PC-9 (cell line): ENCODE measurements at regions of chr2 and their contacts with region 1.

Region 1: GRCh38 chr2:16911746-16912145 is 246.1 kb upstream of the CYRIA start:
- DNase-seq: no peak
- H3K4me3 ChIP-seq: no peak overlapping the region
- H3K27ac ChIP-seq: no peak overlapping the region
- H3K4me1 ChIP-seq: peaks cover 46% of the 10 kb centered on the region
- H3K27me3 ChIP-seq: no peaks in the 10 kb centered on the region
- CTCF ChIP-seq: no peak

Region 2: DNA sequence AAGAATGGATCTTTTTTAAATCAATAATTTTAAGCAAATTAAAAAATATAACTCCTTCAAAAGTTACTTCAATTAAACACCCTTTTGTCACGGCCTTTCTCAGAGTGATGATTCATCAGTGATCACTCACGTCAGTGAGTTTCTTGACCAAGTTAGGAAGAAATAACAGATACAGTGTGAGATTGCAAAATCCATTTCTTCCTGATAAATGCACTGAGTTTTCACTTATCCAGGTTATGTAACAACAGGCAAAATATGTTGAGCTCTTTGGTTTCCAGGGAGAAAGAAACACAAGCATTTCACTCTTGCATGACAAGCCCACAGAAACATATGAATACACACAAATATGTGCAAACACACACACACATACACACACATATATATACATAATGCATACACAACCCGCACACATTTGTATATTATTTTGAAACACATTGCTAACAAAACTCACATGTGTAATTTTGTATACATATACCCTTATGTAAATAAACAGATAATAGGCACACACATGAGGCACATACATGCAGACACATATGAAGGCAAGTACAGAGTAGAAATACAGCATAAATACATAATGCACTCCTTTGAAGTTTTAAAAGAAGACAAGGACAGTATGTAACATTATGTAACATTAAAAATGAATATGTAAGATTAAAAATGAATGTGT is 50.1 kb before region 1 on chr2:
- CTCF ChIA-PET with region 1: no interaction called
- POLR2A ChIA-PET with region 1: no interaction called
- intact Hi-C with region 1: loop called (anchors 2 kb)
- DNase-seq: peak in 1 of 2 experiments; percentile 80
- H3K4me3 ChIP-seq: no peak overlapping the region
- H3K27ac ChIP-seq: peak overlapping the region; percentile 67
- H3K4me1 ChIP-seq: peaks cover 19% of the 10 kb centered on the region
- H3K27me3 ChIP-seq: no peaks in the 10 kb centered on the region
- CTCF ChIP-seq: no peak

Region 3: DNA sequence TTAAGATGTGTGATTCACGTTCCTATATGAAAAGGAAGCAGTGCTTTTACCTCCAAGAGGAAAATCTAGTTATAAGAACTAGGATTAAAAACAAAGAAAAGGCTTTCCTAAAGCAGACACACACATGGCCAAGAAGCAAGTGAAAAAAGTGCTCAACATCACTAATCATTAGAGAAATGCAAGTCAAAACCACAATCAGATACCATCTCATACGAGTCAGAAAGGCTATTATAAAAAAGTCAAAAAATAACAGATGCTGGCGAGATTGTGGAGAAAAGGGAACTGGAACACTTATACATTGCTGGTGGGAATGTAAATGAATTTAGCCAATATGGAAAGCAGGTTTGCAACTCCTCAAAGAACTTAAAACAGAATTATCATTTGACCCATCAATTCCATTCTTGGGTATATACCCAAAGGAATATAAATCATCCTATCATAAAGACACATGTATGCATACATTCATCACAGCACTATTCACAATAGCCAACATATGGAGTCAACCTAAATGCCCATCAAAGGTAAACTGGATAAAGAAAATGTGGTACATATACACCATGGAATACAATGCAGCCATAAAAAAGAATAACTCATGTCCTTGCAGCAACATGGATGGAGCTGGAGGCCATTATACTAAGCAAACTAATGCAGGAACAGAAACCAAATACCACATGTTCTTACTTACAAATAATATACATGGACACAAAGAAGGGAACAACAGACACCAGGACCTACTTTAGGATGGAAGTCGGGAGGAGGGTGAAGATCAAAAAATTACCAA is 321.2 kb after region 1 on chr2:
- CTCF ChIA-PET with region 1: no interaction called
- POLR2A ChIA-PET with region 1: no interaction called
- intact Hi-C with region 1: no loop called
- DNase-seq: no peak
- H3K4me3 ChIP-seq: no peak overlapping the region
- H3K27ac ChIP-seq: no peak overlapping the region
- H3K4me1 ChIP-seq: no peaks in the 10 kb centered on the region
- H3K27me3 ChIP-seq: no peaks in the 10 kb centered on the region
- CTCF ChIP-seq: no peak

Region 4: GRCh38 chr2:17303054-17303453 is 391.3 kb after region 1 on chr2:
- CTCF ChIA-PET with region 1: no interaction called
- POLR2A ChIA-PET with region 1: no interaction called
- intact Hi-C with region 1: loop called (anchors 1 kb)
- DNase-seq: peak; percentile 35 to 99
- H3K4me3 ChIP-seq: peak overlapping the region; percentile 29; the same call in 1 of the 2 replicates
- H3K27ac ChIP-seq: peak overlapping the region; percentile 82
- H3K4me1 ChIP-seq: peaks cover 74% of the 10 kb centered on the region
- H3K27me3 ChIP-seq: no peaks in the 10 kb centered on the region
- CTCF ChIP-seq: no peak

Region 5: GRCh38 chr2:17309741-17310339 is 398.1 kb after region 1 on chr2:
- CTCF ChIA-PET with region 1: no interaction called
- POLR2A ChIA-PET with region 1: no interaction called
- intact Hi-C with region 1: loop called (anchors 1 kb)
- DNase-seq: peak; percentile 31 to 65
- H3K4me3 ChIP-seq: no peak overlapping the region
- H3K27ac ChIP-seq: no peak overlapping the region
- H3K4me1 ChIP-seq: peaks cover 35% of the 10 kb centered on the region
- H3K27me3 ChIP-seq: no peaks in the 10 kb centered on the region
- CTCF ChIP-seq: peak; percentile 90